Common myeloid progenitor, CD34-positive (primary cell): ENCODE measurements at regions of chr7 and their contacts with region 1.

Region 1: GRCh38 chr7:76179686-76180085 is 22.0 kb upstream of the SRRM3 start:
- DNase-seq: no peak
- H3K4me3 ChIP-seq: no peak overlapping the region
- H3K27ac ChIP-seq: no peak overlapping the region
- H3K4me1 ChIP-seq: peaks cover 0 to 5% (median 4%) of the 10 kb centered on the region in 4 experiments
- H3K27me3 ChIP-seq: no peaks in the 10 kb centered on the region

Region 2: DNA sequence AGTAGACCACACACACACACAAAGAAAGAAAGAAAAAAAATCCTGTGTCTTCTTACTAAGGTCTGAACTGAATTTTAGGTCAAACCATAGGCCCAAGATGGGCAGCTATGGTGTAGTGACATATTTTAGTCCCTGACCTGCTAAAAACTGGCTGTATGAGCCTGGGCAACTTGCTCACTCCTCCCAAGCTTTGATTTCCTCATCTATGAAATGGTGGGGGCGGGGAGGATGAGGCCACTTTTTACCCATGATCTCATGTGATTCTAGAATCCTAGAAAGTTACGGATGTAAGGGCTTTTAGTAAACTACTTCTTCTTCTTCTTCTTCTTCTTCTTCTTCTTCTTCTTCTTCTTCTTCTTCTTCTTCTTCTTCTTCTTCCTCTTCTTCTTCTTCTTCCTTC is 360.0 kb before region 1 on chr7:
- CTCF ChIA-PET with region 1: no interaction called
- POLR2A ChIA-PET with region 1: no interaction called
- DNase-seq: no peak
- H3K4me3 ChIP-seq: no peak overlapping the region
- H3K27ac ChIP-seq: no peak overlapping the region
- H3K4me1 ChIP-seq: no peaks in the 10 kb centered on the region
- H3K27me3 ChIP-seq: peaks cover 0 to 2% (median 0%) of the 10 kb centered on the region in 5 experiments

Region 3: DNA sequence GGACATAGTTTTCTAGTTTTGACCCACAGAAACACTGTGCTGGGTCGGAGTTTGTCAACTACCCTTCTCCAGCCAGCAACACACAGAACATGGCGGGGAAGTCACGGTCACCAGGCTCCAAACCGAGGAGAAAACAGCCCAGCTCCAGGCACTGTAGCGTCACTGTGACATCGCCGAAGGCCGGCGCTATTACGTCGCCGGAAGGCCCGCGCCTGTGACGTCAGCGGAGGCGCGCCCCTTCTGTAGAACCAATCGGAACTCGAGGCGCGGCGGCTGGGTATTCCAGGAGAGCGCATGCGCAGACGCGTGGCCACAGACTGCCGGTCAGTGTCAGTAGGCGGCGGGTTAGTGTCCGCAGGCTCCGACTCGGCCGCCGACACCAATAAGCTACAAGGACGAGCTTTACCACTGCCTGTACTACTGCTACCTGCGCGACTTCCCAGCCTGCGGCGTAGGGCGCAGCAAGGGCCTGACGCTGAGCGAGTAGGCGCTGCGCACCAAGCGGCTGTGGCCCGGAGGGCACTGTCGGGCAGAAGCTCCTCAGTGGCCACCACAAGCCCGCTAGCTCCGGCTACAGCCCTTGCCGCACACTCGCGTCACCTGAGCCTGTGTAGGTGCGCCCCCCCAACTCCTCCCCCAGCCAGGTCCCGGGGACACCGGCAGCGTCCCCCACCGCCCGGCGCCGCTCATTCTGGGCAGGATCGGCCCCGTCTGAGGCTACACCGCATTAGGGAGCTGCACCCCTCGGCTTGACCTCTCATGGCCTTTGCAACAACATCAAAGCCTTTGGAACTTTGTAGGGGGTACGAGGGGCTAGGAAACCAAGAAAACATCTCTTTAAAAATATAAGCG is 13.1 kb before region 1 on chr7:
- CTCF ChIA-PET with region 1: interaction called, 27 read pairs
- POLR2A ChIA-PET with region 1: interaction called, 3 read pairs
- DNase-seq: peak; percentile 95 to 97 (median 96)
- H3K4me3 ChIP-seq: peak overlapping the region; percentile 50 to 95 (median 86)
- H3K27ac ChIP-seq: peak overlapping the region in 1 of 2 experiments; percentile 82
- H3K4me1 ChIP-seq: peaks cover 0 to 10% (median 4%) of the 10 kb centered on the region in 4 experiments
- H3K27me3 ChIP-seq: no peaks in the 10 kb centered on the region

Region 4: GRCh38 chr7:76206633-76207032 is 26.9 kb after region 1 on chr7:
- CTCF ChIA-PET with region 1: no interaction called
- POLR2A ChIA-PET with region 1: no interaction called
- DNase-seq: no peak
- H3K4me3 ChIP-seq: no peak overlapping the region
- H3K27ac ChIP-seq: no peak overlapping the region
- H3K4me1 ChIP-seq: peaks cover 0 to 6% (median 2%) of the 10 kb centered on the region in 4 experiments
- H3K27me3 ChIP-seq: peaks cover 0 to 32% (median 3%) of the 10 kb centered on the region in 5 experiments

Region 5: DNA sequence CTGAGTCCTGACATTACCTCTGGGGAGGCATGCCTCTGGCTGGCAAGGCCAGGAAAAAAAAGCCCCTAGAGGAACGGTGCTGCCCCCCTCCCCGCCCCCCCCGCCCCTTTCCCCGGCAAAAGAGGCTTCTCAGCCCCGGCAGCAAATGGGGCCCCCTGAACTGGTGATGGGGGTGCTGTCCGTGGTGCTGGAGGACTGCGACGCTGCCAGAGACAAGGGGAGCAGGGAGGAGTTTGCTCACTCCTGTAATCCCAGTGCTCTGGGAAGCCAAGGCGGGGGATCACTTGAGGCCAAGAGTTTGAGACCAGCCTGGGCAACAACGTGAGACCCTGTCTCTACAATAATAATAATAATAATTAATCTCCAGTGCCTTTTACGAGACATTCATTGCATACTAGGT is 45.7 kb after region 1 on chr7:
- CTCF ChIA-PET with region 1: no interaction called
- POLR2A ChIA-PET with region 1: no interaction called
- DNase-seq: peak; percentile 27 to 70 (median 69)
- H3K4me3 ChIP-seq: no peak overlapping the region
- H3K27ac ChIP-seq: no peak overlapping the region
- H3K4me1 ChIP-seq: no peaks in the 10 kb centered on the region
- H3K27me3 ChIP-seq: peaks cover 0 to 39% (median 8%) of the 10 kb centered on the region in 5 experiments

Region 6: GRCh38 chr7:76262683-76263402 is 83.2 kb after region 1 on chr7:
- CTCF ChIA-PET with region 1: interaction called, 48 read pairs
- POLR2A ChIA-PET with region 1: no interaction called
- DNase-seq: peak; percentile 61 to 72 (median 63)
- H3K4me3 ChIP-seq: no peak overlapping the region
- H3K27ac ChIP-seq: no peak overlapping the region
- H3K4me1 ChIP-seq: peaks cover 0 to 16% (median 10%) of the 10 kb centered on the region in 4 experiments
- H3K27me3 ChIP-seq: peaks cover 0 to 48% (median 8%) of the 10 kb centered on the region in 5 experiments

Region 7: GRCh38 chr7:76291343-76292212 is 111.9 kb after region 1 on chr7:
- CTCF ChIA-PET with region 1: interaction called, 13 read pairs
- POLR2A ChIA-PET with region 1: no interaction called
- DNase-seq: peak; percentile 92 to 97 (median 96)
- H3K4me3 ChIP-seq: peak overlapping the region in 6 of 7 experiments; percentile 13 to 63 (median 50)
- H3K27ac ChIP-seq: peak overlapping the region; percentile 40 to 72
- H3K4me1 ChIP-seq: peaks cover 3 to 52% (median 41%) of the 10 kb centered on the region in 4 experiments
- H3K27me3 ChIP-seq: no peaks in the 10 kb centered on the region